Brain microvascular endothelial cell (primary cell): ENCODE measurements at regions of chr9 and their contacts with region 1.

Region 1: DNA sequence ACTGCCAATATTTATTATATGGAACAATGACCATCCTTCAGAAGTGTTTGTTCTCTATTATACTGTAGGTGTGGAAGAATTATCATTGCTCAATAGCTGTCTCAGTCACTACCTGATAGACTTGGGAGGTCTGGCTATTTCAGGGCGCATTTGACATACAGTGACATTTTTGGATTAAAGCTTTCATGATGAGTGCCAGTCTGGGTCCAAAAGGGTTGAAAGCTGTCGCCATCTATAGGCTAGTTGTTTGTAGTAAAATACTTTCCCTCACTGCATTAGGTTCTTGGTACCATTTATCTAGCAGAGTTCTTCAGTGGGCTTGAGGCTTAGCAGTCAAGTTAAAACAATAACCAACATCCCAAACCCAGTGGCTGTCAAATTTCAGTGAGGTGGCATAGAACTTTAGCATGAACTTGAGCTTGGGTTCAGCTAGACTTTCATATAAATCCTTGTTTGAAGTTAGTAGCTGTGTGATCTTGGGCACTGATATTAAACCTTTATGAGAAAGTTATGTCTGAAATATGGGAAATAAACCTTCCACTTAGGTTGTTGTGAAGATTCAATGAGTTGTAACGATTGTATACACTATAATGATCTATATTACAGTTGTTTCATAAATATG is 110.5 kb upstream of the CDKN2B start:
- DNase-seq: peak; percentile 63
- H3K4me3 ChIP-seq: no peak overlapping the region
- H3K27ac ChIP-seq: peak overlapping the region; percentile 84
- H3K27me3 ChIP-seq: no peaks in the 10 kb centered on the region
- CTCF ChIP-seq: peak; percentile 71

Region 2: DNA sequence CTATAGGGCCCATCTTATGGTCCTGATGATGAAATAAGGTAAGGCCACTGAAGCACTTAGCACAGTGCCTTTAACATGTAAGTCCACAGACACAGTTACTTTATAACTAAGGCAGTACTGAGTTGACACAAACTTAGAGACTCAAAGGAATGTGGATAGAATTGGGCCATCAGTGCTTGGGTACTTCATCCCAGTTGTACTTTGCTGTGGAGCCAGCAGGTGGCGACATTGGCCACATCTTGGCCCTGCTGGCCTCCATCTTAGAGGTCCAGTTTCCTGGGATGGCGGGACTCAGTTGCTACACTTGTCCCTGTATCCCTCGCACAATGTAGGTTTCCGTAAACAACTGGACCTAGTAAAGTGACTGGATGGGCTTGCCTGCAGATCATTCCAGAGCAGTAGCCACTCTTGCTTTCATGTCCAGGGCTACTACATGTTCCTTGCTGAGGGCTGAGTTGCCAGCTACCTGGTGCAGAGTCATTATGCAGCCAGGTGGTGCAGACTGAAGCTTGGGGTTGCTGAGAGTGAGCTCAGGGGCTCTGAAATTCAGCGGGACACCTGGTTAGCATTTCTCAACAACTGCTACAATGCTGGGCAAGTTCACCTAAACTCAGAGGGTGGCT is 306.6 kb before region 1 on chr9:
- in situ Hi-C with region 1: loop called (anchors 10 kb)
- DNase-seq: peak; percentile 74
- H3K4me3 ChIP-seq: no peak overlapping the region
- H3K27ac ChIP-seq: peak overlapping the region; percentile 59
- H3K27me3 ChIP-seq: no peaks in the 10 kb centered on the region
- CTCF ChIP-seq: peak; percentile 89

Region 3: GRCh38 chr9:22026696-22027095 is 93.0 kb before region 1 on chr9:
- in situ Hi-C with region 1: no loop called
- DNase-seq: no peak
- H3K4me3 ChIP-seq: no peak overlapping the region
- H3K27ac ChIP-seq: no peak overlapping the region
- H3K27me3 ChIP-seq: no peaks in the 10 kb centered on the region
- CTCF ChIP-seq: no peak